ENCODE measurements at regions of chr7 and their contacts with region 1.

Region 1: DNA sequence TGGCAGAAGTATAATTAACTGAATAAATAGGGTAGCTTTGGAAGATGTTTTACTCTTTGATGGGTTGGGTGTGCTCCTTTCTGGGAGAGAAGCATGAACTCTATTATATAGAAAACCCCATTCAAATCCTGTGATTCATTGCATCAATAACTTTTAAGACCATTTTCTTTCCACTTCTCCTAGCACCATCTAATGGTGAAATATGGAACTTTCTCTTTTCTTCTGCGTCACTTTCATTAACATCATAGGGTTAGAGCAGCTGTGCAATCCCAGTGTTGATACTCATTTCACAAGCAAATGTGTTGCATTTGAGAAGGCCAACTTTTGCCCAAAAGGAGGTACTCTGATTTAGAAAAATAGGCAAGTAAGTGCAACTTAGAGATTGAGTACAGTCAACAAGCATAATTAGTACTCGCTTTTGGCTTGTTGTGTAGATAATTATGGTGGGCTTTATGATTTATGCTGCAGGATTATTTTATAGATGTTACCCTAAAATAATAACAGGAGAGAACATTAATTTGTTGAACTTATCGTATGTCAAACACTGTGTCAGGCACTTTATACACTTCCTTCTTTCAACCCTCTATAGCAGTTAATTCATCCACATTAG is 92.9 kb downstream of the CPED1 start:
- DNase-seq: no peak
- ATAC-seq: peak; percentile 29 to 66 (median 52)
- H3K4me3 ChIP-seq: no peak overlapping the region
- H3K27ac ChIP-seq: peak overlapping the region; percentile 56
- H3K4me1 ChIP-seq: peaks cover 50% of the 10 kb centered on the region
- H3K27me3 ChIP-seq: no peaks in the 10 kb centered on the region
- CTCF ChIP-seq: peak; percentile 77

Region 2: GRCh38 chr7:120927454-120928103 is 153.9 kb before region 1 on chr7:
- intact Hi-C with region 1: no loop called
- DNase-seq: no peak
- ATAC-seq: no peak
- H3K4me3 ChIP-seq: no peak overlapping the region
- H3K27ac ChIP-seq: no peak overlapping the region
- H3K4me1 ChIP-seq: no peaks in the 10 kb centered on the region
- H3K27me3 ChIP-seq: no peaks in the 10 kb centered on the region
- CTCF ChIP-seq: no peak

Region 3: DNA sequence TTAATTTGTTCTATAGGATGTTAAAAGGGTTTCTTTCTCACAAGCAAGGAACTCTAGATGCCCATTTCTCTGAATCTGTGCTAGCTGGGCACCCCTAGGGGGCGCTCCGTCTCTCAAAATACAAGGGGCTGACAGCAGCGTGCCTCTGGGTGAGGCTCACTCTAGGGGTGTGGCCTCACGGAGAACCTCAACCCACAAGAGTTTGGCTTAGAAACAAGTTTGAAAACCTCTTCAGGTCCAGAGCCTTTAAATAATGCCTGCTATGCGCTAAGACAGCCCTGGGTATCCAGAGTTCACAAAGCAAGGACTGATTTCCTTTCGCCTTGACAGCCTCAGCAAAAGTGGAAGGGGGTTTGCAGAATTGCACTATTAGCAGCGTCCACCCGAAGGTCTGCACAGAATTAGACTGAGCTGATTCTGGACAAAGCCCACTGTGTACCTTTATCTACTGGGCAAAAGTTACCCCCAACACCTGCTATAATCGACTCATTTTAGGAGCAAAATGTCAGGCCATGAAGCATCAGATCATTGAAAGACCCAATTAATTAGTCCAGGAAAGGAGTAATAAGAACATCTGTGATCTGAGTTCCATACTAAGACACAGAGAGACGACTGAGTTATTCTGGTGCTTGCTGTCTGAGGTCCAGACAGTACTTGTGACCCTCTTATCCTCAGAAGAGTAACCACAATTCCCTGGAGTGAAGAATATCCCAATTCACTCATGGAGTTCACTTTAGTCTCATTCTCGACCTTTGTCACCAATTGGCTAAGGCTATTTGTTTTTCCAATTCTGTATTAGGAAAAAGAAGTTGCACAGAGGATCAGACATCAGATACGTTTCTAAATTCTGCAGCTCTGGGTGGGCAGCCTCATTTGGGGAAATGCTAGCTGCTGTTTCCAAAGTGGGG is 93.5 kb before region 1 on chr7:
- intact Hi-C with region 1: loop called (anchors 1 to 2 kb)
- DNase-seq: peak; percentile 90 to 95
- ATAC-seq: peak; percentile 83 to 89 (median 87)
- H3K4me3 ChIP-seq: peak overlapping the region; percentile 75
- H3K27ac ChIP-seq: peak overlapping the region; percentile 94
- H3K4me1 ChIP-seq: peaks cover 12% of the 10 kb centered on the region
- H3K27me3 ChIP-seq: no peaks in the 10 kb centered on the region
- CTCF ChIP-seq: peak; percentile 98

Region 4: DNA sequence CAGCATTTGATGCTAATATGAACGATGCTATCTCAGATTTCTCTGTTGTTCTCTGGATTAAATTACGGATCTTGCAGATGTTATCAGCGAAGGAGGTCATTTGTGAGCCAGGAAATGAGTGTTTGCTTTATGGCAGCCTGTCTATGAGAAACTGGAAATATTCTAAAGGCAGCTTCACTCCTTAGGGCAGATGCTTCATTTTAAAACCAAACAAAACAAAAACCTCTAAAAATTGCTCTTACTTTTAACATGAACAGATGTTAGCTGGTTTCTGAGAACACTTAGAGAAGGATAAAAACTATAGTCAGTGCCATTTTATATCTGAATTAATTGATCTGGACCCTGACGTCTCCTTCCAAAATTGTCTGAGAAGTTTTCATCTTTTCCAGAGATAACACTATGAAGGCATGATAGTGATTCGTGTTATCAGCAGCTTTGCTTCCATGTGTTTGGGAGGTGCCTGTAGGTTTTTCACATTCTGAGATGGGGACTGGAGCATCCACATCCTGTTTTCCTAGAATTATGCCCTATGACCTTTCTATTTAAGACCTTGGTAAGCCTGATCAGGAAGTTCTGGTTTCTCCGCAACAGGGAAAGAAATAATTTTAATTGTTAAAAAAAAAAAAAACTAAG is 39.8 kb before region 1 on chr7:
- intact Hi-C with region 1: loop called in 1 of 2 experiments (anchors 5 kb)
- DNase-seq: no peak
- ATAC-seq: peak in 2 of 4 donors; percentile 41 to 42
- H3K4me3 ChIP-seq: peak overlapping the region; percentile 15
- H3K27ac ChIP-seq: peak overlapping the region; percentile 47
- H3K4me1 ChIP-seq: peaks cover 34% of the 10 kb centered on the region
- H3K27me3 ChIP-seq: no peaks in the 10 kb centered on the region
- CTCF ChIP-seq: no peak

Measured in psoas muscle (tissue), 8 donors.